Sigmoid colon (tissue), 7 donors: ENCODE measurements at regions of chr1 and their contacts with region 1.

Region 1: DNA sequence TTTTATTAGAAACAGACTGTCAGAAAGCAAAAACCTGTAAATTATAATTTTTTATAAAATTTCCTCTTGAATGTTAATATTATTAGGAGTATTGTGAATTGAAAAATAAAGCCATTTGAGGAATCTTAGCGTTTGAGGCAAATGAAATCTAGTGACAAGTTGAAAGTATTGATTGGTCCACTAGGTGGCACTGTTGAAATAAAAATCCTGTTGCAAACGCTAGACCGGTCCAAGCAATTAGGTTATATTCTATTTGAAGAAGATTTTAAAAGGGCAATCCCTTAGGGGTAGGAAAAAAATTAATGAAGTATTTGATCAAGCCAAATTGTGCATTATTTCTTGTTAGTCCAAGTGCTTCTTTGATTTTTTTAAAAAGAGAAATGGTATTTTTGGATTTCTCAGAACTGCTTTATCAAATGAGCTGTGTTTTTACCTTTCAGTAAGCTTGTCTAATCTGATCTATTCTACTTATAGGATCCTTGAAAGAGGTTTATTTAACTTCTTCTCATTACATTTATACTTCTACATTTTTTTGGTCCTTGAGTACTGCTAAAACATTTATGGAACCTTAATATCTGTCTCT is 57.7 kb downstream of the ATG4C start:
- DNase-seq: no peak
- H3K4me3 ChIP-seq: no peak overlapping the region
- H3K27ac ChIP-seq: no peak overlapping the region
- H3K4me1 ChIP-seq: no peaks in the 10 kb centered on the region
- H3K27me3 ChIP-seq: no peaks in the 10 kb centered on the region
- CTCF ChIP-seq: peak in 3 of 4 experiments; percentile 35 to 70 (median 39)
- EP300 ChIP-seq: no peak
- POLR2A ChIP-seq: no peak

Region 2: GRCh38 chr1:62687903-62688686 is 153.6 kb before region 1 on chr1 and contains the start of gene DOCK7:
- intact Hi-C with region 1: no loop called
- DNase-seq: peak; percentile 86
- H3K4me3 ChIP-seq: peak within 1 kb of the TSS; percentile 81 to 92 (median 88)
- H3K27ac ChIP-seq: peak within 1 kb of the TSS; percentile 81 to 88 (median 84)
- H3K4me1 ChIP-seq: peaks cover 0 to 61% (median 49%) of the 10 kb centered on the region in 4 donors
- H3K27me3 ChIP-seq: no peaks in the 10 kb centered on the region
- CTCF ChIP-seq: no peak
- EP300 ChIP-seq: no peak
- POLR2A ChIP-seq: no peak
- total RNA-seq, gene DOCK7: 32.4 to 54.8 (median 42.9) TPM

Region 3: DNA sequence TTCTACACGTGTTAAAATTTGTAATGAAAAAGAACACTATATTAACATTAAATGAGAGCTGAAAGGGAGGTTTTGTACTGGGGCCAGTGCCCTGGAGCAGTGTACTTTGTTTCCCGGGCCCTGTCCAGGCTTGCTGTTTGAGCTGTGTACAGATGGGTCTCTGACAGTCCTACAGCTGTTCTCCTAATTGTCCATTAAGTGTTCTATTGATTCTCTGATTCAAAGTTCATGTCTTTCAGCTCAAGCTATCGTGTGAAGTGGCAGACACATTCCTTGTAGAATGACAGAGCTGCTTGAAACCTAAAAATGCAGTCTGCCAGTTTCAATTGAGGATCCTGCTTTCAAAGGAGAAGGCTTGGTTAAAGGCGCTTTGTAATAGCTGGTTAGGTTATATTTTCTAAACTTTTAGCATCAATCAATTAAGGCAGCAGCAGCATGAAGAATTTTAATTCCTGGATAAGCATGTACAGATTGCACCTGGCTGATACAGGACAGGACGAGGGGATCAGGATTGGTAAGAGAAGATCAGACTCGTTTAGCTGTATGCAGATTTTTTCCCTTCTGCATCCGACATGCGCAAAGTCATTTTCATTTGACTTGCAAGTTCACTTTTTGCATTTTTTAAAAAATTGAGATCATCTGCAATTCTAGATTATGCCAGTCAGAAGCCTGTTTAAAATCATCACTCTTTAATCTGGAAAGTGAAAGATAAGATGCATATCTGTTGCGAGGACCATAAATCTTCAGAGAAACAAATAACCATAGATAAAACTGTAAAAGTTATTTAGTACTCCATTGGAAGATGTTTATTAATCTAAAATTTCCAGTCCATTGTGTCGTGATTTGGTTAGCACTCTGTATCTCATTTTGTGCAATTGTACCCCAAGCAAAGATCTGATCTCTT is 40.8 kb after region 1 on chr1:
- intact Hi-C with region 1: no loop called
- DNase-seq: no peak
- H3K4me3 ChIP-seq: no peak overlapping the region
- H3K27ac ChIP-seq: no peak overlapping the region
- H3K4me1 ChIP-seq: no peaks in the 10 kb centered on the region
- H3K27me3 ChIP-seq: no peaks in the 10 kb centered on the region
- CTCF ChIP-seq: no peak
- EP300 ChIP-seq: no peak
- POLR2A ChIP-seq: no peak

Region 4: GRCh38 chr1:62906428-62906886 is 64.8 kb after region 1 on chr1:
- intact Hi-C with region 1: no loop called
- DNase-seq: no peak
- H3K4me3 ChIP-seq: no peak overlapping the region
- H3K27ac ChIP-seq: no peak overlapping the region
- H3K4me1 ChIP-seq: no peaks in the 10 kb centered on the region
- H3K27me3 ChIP-seq: no peaks in the 10 kb centered on the region
- CTCF ChIP-seq: no peak
- EP300 ChIP-seq: no peak
- POLR2A ChIP-seq: no peak

Region 5: DNA sequence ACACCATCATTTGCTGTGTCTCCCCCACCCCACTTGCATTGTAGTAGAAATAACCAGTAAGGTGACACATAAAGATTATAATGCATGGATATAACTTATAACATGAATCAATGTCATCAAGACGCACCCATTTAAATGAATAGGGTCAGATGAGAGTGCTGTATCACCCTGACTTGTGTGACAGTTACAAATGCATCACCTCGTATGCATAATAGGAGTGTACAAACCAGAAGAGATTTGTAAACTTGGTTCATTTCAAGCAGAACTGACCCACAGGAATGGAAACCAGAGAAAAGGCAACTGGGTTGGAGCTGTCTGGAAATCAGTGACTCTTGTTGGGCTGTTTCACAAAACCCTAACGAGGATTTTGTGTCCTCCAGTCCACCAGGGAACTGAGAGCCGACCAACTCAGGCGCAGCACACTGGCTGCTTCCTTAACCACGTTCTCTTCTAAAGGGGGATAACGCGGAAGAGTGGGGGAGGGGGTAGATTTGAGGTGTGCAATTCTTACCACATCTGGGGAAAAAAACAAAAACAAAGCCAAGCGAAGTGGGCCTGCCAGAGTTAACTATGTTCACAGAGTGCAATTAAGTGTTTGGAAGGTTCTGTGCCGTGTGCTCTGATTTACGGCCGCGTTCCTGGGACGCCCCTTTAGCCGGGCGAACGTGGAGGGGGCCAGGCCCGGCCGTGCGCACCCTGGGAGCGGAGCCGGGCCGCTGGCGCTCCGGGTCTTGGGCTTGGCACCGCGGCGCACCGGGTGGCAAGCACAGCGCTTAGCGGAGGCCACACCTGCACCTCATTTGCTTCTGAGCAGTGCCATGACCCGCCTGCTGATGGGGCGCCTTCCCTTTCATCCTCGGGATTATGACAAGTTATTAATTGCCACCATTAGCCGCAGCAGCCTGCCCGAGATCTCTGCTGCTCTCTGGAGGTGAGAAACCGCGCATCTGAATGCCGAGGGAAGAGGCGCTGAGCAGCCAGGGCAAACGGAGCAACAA is 231.9 kb after region 1 on chr1:
- intact Hi-C with region 1: loop called (anchors 5 kb)
- DNase-seq: no peak
- H3K4me3 ChIP-seq: peak overlapping the region in 2 of 4 donors; percentile 20 to 24
- H3K27ac ChIP-seq: no peak overlapping the region
- H3K4me1 ChIP-seq: peaks cover 0 to 5% (median 0%) of the 10 kb centered on the region in 4 donors
- H3K27me3 ChIP-seq: peaks cover 5 to 33% (median 10%) of the 10 kb centered on the region in 3 donors
- CTCF ChIP-seq: no peak
- EP300 ChIP-seq: no peak
- POLR2A ChIP-seq: no peak

Region 6: GRCh38 chr1:63327417-63328139 is 485.9 kb after region 1 on chr1:
- intact Hi-C with region 1: loop called (anchors 10 kb)
- DNase-seq: peak; percentile 77
- H3K4me3 ChIP-seq: peak overlapping the region in 1 of 4 donors; percentile 53
- H3K27ac ChIP-seq: peak overlapping the region in 2 of 4 donors; percentile 21 to 27
- H3K4me1 ChIP-seq: peaks cover 0 to 31% (median 24%) of the 10 kb centered on the region in 4 donors
- H3K27me3 ChIP-seq: peaks cover 69 to 100% (median 94%) of the 10 kb centered on the region in 3 donors
- CTCF ChIP-seq: peak in 3 of 4 experiments; percentile 8 to 56 (median 27)
- EP300 ChIP-seq: no peak
- POLR2A ChIP-seq: no peak

Region 7: GRCh38 chr1:63442141-63442475 is 600.4 kb after region 1 on chr1:
- intact Hi-C with region 1: loop called (anchors 5 kb)
- DNase-seq: no peak
- H3K4me3 ChIP-seq: no peak overlapping the region
- H3K27ac ChIP-seq: no peak overlapping the region
- H3K4me1 ChIP-seq: no peaks in the 10 kb centered on the region
- H3K27me3 ChIP-seq: no peaks in the 10 kb centered on the region
- CTCF ChIP-seq: no peak
- EP300 ChIP-seq: no peak
- POLR2A ChIP-seq: no peak